ENCODE measurements at regions of chr1 and their contacts with region 1.

Region 1: DNA sequence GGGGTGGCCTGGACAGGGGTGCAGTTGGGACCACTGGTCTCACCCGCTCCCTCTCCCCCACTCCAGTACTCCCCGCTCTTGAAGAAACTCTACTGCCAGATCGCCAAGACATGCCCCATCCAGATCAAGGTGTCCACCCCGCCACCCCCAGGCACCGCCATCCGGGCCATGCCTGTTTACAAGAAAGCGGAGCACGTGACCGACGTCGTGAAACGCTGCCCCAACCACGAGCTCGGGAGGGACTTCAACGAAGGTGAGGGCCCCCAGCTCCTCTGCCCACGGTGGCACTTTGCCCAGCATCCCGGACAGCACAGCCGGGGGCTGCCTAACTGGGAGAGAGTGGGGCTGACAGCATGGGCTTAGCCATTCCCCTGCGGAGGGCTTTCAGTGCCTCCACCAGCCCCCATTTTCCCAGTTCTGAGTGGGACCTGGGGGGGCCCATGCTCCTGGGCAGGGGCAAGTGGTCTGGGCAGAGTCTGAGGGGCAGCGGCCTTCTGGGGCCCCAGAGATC is 30.2 kb upstream of the CCDC27 start:
- DNase-seq: no peak
- H3K4me3 ChIP-seq: no peak overlapping the region
- H3K27ac ChIP-seq: no peak overlapping the region
- H3K4me1 ChIP-seq: peaks cover 0 to 6% (median 0%) of the 10 kb centered on the region in 4 donors
- H3K27me3 ChIP-seq: peaks cover 10 to 51% (median 31%) of the 10 kb centered on the region in 3 donors
- CTCF ChIP-seq: no peak
- EP300 ChIP-seq: no peak
- POLR2A ChIP-seq: no peak

Region 2: DNA sequence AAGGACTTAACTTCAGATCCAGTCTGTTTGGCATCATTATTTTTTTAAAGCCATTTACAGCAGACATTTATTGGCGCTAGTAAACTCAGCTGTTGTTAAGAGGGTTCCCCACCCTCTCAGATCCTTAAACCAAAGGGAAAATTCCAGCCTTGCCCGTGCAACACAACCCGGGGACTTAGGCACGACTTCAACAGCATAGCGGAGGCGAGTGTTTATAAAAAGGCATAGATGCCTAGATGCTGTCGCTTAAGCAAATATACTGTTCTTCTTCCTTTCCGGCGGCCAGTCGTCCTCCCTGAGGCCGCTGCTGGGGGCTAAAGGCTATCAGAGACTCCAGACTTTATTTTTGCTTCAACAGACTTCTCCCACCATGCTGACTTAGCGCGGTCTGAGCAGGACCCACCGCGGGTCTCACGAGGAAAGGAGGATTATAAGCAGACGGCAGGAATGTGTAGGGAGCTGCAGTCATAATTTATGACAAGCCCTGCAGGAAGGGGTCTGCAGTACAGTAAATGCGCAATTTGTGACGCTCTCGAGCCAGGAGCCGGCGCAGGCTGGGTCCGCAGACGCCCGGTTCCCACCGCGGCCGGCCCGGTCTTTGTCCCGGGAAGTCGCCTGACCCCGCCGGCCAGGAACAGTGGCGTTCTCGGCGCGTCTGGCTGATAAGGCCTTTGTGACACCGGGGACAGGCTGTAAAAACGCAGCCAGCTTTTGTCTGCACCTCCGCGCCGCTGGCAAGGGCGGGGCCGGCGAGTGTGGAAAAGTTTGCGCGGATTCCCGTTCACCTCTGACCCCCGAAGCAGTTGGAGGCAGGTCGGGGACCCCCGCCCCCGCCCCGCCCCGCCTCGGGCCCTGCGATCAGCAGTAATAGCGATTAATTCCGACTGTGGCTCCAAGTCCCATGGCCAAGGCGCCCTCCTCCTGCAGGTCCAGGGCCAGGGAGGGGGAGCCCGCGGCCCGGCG is 328.7 kb before region 1 on chr1:
- intact Hi-C with region 1: no loop called
- DNase-seq: no peak
- H3K4me3 ChIP-seq: peak overlapping the region in 3 of 4 donors; percentile 22 to 31 (median 29)
- H3K27ac ChIP-seq: peak overlapping the region in 2 of 4 donors; percentile 1 to 8
- H3K4me1 ChIP-seq: peaks cover 0 to 27% (median 20%) of the 10 kb centered on the region in 4 donors
- H3K27me3 ChIP-seq: peaks cover 62 to 100% (median 92%) of the 10 kb centered on the region in 3 donors
- CTCF ChIP-seq: no peak
- EP300 ChIP-seq: no peak
- POLR2A ChIP-seq: no peak

Region 3: GRCh38 chr1:3491291-3492246 is 230.4 kb before region 1 on chr1:
- intact Hi-C with region 1: loop called (anchors 5 kb)
- DNase-seq: peak; percentile 84
- H3K4me3 ChIP-seq: peak overlapping the region in 1 of 4 donors; percentile 14
- H3K27ac ChIP-seq: no peak overlapping the region
- H3K4me1 ChIP-seq: peaks cover 0 to 9% (median 7%) of the 10 kb centered on the region in 4 donors
- H3K27me3 ChIP-seq: peaks cover 0 to 9% (median 0%) of the 10 kb centered on the region in 3 donors
- CTCF ChIP-seq: peak; percentile 89 to 100 (median 96)
- EP300 ChIP-seq: no peak
- POLR2A ChIP-seq: no peak

Region 4: GRCh38 chr1:3631330-3632262 is 90.4 kb before region 1 on chr1:
- intact Hi-C with region 1: no loop called
- DNase-seq: peak; percentile 61
- H3K4me3 ChIP-seq: no peak overlapping the region
- H3K27ac ChIP-seq: no peak overlapping the region
- H3K4me1 ChIP-seq: peaks cover 0 to under 1% (median 0%) of the 10 kb centered on the region in 4 donors
- H3K27me3 ChIP-seq: no peaks in the 10 kb centered on the region
- CTCF ChIP-seq: no peak
- EP300 ChIP-seq: no peak
- POLR2A ChIP-seq: no peak

Measured in sigmoid colon (tissue), 7 donors.